ENCODE measurements at regions of chr4 and their contacts with region 1.

Region 1: GRCh38 chr4:26719954-26720552 is 136.2 kb downstream of the TBC1D19 start:
- DNase-seq: no peak
- H3K4me3 ChIP-seq: no peak overlapping the region
- H3K27ac ChIP-seq: no peak overlapping the region
- H3K4me1 ChIP-seq: no peaks in the 10 kb centered on the region
- H3K27me3 ChIP-seq: no peaks in the 10 kb centered on the region
- CTCF ChIP-seq: peak in 2 of 3 experiments; percentile 38 to 51; a peak in 2 of 4 replicates
- EP300 ChIP-seq: no peak
- POLR2A ChIP-seq: no peak
- RAD21 ChIP-seq: peak; percentile 64 to 85

Region 2: DNA sequence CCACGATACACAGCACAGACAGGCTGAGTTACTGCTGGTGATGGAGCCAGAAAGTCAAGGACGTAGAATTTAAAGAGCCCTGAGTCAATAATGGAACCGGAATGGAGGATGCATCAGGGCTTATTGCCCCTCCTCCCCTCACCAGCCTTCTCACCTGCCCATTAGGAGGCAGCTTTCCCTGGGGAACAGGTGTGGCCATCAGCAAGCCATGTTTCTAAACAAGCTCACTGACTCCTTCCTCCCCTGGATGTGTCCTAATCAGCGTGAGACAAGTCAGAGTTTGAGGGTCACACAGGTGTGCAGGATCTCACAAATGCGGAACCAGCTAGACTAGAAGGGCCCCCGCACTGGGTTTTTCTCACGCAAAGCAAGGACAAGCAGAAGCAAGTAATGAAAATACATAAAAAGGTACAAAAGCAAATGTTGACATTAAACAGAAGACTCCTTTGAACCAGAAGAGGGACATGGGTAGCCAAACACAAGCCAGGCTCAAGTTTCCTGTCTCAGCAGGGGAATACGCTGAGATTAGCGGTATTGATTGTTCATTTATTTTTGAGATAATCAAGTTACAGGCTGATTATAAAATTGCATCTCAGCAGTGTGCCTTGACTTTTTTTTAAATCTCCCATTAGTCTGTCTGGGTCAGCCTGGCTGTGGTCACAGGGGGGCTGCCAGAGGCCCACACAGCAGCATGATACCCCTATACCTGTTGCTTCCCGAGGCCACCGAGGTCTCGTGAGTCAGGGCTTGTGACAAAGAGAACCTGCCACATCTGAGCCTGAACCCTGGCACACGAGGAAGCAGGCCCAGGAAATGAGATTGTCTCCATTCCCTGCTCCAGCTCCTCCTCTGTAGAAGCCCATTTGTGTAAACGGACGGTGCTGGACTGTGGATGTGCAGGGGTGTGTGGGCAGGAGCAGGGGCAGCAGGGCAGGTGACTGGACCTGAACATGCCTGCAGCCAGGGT is 267.2 kb before region 1 on chr4:
- CTCF ChIA-PET with region 1: interaction called, 73 read pairs
- POLR2A ChIA-PET with region 1: no interaction called
- DNase-seq: peak in 1 of 2 experiments; percentile 47
- H3K4me3 ChIP-seq: no peak overlapping the region
- H3K27ac ChIP-seq: no peak overlapping the region
- H3K4me1 ChIP-seq: peaks cover 4 to 11% (median 8%) of the 10 kb centered on the region in 4 experiments
- H3K27me3 ChIP-seq: no peaks in the 10 kb centered on the region
- CTCF ChIP-seq: peak in 1 of 3 experiments; percentile 9; a peak in 1 of 4 replicates
- EP300 ChIP-seq: no peak
- POLR2A ChIP-seq: no peak
- RAD21 ChIP-seq: peak in 1 of 2 experiments; percentile 17; a peak in 1 of 4 replicates

Region 3: DNA sequence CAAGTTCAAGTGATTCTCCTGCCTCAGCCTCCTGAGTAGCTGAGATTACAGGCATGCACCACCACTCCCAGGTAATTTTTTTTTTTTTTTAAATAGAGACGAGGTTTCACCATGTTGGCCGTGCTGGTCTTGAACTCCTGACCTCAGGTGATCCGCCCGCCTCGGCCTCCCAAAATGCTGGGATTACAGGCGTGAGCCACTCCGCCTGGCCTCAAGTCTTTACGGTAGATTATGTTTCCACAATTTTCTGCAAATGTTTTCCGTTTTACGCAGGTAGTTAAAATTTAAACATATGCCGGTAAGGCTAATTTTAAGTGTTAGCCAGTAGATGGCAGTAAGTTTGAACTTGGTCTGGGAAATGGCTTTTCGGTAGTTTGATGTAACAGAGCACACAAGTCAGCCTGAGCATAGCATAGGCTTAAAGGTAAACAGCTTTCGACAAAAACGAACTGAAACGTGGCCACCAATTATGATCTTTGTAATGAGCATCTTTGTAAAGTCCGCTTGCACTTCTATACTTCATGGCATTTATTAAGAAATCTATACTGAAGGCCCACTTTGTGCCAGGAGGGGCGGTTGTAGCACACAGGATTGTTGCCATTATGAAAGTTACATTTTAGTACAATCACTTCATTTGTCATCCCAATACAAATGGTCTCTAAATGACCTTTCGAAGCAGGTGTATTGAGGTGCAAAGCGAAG is 260.8 kb before region 1 on chr4:
- CTCF ChIA-PET with region 1: interaction called, 73 read pairs
- POLR2A ChIA-PET with region 1: no interaction called
- DNase-seq: peak in 1 of 2 experiments; percentile 9
- H3K4me3 ChIP-seq: no peak overlapping the region
- H3K27ac ChIP-seq: no peak overlapping the region
- H3K4me1 ChIP-seq: no peaks in the 10 kb centered on the region
- H3K27me3 ChIP-seq: no peaks in the 10 kb centered on the region
- CTCF ChIP-seq: peak in 2 of 3 experiments; percentile 44 to 60; a peak in 2 of 4 replicates
- EP300 ChIP-seq: no peak
- POLR2A ChIP-seq: no peak
- RAD21 ChIP-seq: peak; percentile 66 to 75

Region 4: DNA sequence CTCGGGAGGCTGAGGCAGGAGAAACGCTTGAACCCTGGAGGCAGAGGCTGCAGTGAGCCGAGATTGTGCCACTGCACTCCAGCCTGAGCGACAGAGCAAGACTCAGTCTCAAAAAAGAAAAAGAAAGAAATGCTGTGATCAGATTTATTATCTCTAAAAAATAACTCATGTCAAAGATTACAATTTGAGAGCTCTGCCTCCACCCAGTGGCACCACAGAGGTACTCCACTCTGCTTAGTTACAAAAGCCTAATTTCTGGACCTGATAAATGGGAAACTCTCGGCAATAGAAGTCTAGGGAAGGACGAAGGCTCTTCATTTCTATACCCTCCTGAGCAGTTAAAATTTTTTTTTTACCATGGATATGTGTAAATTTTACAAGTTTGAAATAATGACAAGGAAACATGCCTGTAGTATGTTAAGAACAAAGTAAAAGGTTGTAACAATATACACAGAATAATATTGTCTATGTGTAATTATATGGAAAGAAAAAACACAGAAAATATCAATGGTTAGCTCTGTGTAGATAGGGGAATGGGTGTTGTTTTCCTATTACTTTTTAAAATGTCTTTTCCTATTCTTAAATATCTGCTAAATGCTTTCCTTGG is 290.4 kb after region 1 on chr4:
- CTCF ChIA-PET with region 1: interaction called, 18 read pairs
- POLR2A ChIA-PET with region 1: no interaction called
- DNase-seq: peak in 1 of 2 experiments; percentile 64
- H3K4me3 ChIP-seq: no peak overlapping the region
- H3K27ac ChIP-seq: no peak overlapping the region
- H3K4me1 ChIP-seq: no peaks in the 10 kb centered on the region
- H3K27me3 ChIP-seq: no peaks in the 10 kb centered on the region
- CTCF ChIP-seq: peak in 2 of 3 experiments; percentile 67 to 69; a peak in 3 of 4 replicates
- EP300 ChIP-seq: no peak
- POLR2A ChIP-seq: no peak
- RAD21 ChIP-seq: peak; percentile 85 to 90

Measured in H1 (cell line).